Heart left ventricle (tissue), 16 donors: ENCODE measurements at regions of chr6 and their contacts with region 1.

Region 1: GRCh38 chr6:17392978-17393891 is at the start of gene CAP2:
- DNase-seq: peak; percentile 72 to 86 (median 78)
- ATAC-seq: peak; percentile 89 to 97 (median 96)
- H3K4me3 ChIP-seq: peak within 1 kb of the TSS; percentile 39 to 88 (median 62)
- H3K27ac ChIP-seq: peak within 1 kb of the TSS; percentile 46 to 93 (median 84)
- H3K4me1 ChIP-seq: peaks cover 0 to 7% (median 2%) of the 10 kb centered on the region in 12 donors
- H3K27me3 ChIP-seq: peaks cover 0 to 29% (median 0%) of the 10 kb centered on the region in 9 donors
- CTCF ChIP-seq: no peak
- POLR2A ChIP-seq: peak in 1 of 2 donors; percentile 51
- total RNA-seq, gene CAP2: 70.8 to 187 (median 143) TPM

Region 2: GRCh38 chr6:17289630-17290061 is 103.6 kb before region 1 on chr6:
- intact Hi-C with region 1: loop called in 5 of 10 experiments (anchors 5 to 10 kb)
- DNase-seq: peak in 4 of 5 donors; percentile 67 to 87 (median 80)
- ATAC-seq: peak; percentile 89 to 94 (median 91)
- H3K4me3 ChIP-seq: peak overlapping the region in 10 of 12 donors; percentile 7 to 45 (median 35)
- H3K27ac ChIP-seq: peak overlapping the region; percentile 73 to 94 (median 80)
- H3K4me1 ChIP-seq: peaks cover 0 to 38% (median 8%) of the 10 kb centered on the region in 12 donors
- H3K27me3 ChIP-seq: no peaks in the 10 kb centered on the region
- CTCF ChIP-seq: no peak
- POLR2A ChIP-seq: peak in 1 of 2 donors; percentile 33

Region 3: GRCh38 chr6:17297271-17298080 is 95.8 kb before region 1 on chr6:
- intact Hi-C with region 1: loop called in 5 of 10 experiments (anchors 5 to 10 kb)
- DNase-seq: no peak
- ATAC-seq: peak in 3 of 4 donors; percentile 24 to 56 (median 36)
- H3K4me3 ChIP-seq: no peak overlapping the region
- H3K27ac ChIP-seq: peak overlapping the region; percentile 4 to 69 (median 36)
- H3K4me1 ChIP-seq: peaks cover 0 to 32% (median 4%) of the 10 kb centered on the region in 12 donors
- H3K27me3 ChIP-seq: no peaks in the 10 kb centered on the region
- CTCF ChIP-seq: no peak
- POLR2A ChIP-seq: no peak

Region 4: GRCh38 chr6:17311595-17312311 is 81.5 kb before region 1 on chr6:
- intact Hi-C with region 1: loop called in 1 of 10 experiments (anchors 5 kb)
- DNase-seq: peak in 4 of 5 donors; percentile 13 to 61 (median 38)
- ATAC-seq: peak; percentile 77 to 93 (median 92)
- H3K4me3 ChIP-seq: peak overlapping the region in 3 of 12 donors; percentile 1 to 30 (median 8)
- H3K27ac ChIP-seq: peak overlapping the region in 11 of 12 donors; percentile 25 to 83 (median 65)
- H3K4me1 ChIP-seq: peaks cover 0 to 16% (median 4%) of the 10 kb centered on the region in 12 donors
- H3K27me3 ChIP-seq: no peaks in the 10 kb centered on the region
- CTCF ChIP-seq: no peak
- POLR2A ChIP-seq: peak in 1 of 2 donors; percentile 32

Region 5: DNA sequence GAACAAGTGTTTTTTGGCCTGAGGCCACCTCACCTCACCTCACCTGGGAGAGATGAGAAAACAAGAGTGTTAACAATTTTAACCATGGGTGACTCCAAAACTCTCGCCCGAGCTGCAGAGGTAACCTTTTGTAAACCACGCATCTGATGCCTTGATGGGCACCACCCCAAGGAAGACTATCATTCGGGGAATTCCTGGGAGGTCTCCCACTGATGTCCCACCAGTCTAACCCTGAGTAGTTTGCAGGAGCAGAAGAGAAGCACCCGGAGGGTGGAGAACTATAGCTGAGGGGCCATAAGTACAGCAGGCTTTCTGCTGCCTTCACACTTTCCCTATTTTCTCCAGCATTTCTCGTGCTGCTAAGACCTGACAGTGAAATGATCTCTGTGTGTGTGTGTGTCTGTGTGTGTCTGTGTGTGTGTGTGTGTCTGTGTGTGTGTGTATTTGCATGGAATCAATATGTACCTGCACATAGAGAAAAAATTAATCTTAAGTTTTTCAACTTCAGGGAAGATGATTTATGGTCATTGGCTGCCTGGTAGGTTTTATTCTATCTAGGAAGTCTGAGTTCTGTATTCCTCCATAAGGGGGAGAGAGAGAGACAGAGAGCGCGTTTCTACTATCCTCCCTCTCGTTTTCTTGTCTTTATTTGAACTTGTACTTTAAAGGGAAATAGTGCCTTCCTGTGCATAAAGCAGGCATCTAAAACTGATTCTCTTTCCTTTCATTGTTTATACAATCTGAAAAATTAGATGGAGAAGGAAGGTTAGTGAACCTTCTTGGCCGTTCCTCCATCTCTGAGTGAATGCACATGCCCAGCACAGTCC is 76.0 kb after region 1 on chr6:
- intact Hi-C with region 1: loop called in 1 of 10 experiments (anchors 10 kb)
- DNase-seq: no peak
- ATAC-seq: no peak
- H3K4me3 ChIP-seq: no peak overlapping the region
- H3K27ac ChIP-seq: peak overlapping the region in 1 of 12 donors; percentile 81
- H3K4me1 ChIP-seq: peaks cover 0 to 27% (median 6%) of the 10 kb centered on the region in 12 donors
- H3K27me3 ChIP-seq: no peaks in the 10 kb centered on the region
- CTCF ChIP-seq: peak in 7 of 12 donors; percentile 27 to 45 (median 33)
- POLR2A ChIP-seq: no peak